Activated CD4-positive, alpha-beta memory T cell treated with anti-CD3 and anti-CD28 coated beads, Interleukin-2, amount 10 ng/mL, durations not matched to agents 7 days and 5 days (primary cell): ENCODE measurements at regions of chr11 and their contacts with region 1.

Region 1: GRCh38 chr11:57311109-57311936 is 13.4 kb downstream of the TNKS1BP1 start:
- DNase-seq: peak; percentile 82
- H3K4me3 Mint-ChIP-seq: peak overlapping the region; percentile 63
- H3K27ac Mint-ChIP-seq: no peak overlapping the region
- H3K4me1 Mint-ChIP-seq: peaks cover 20% of the 10 kb centered on the region
- H3K27me3 Mint-ChIP-seq: no peaks in the 10 kb centered on the region

Region 2: DNA sequence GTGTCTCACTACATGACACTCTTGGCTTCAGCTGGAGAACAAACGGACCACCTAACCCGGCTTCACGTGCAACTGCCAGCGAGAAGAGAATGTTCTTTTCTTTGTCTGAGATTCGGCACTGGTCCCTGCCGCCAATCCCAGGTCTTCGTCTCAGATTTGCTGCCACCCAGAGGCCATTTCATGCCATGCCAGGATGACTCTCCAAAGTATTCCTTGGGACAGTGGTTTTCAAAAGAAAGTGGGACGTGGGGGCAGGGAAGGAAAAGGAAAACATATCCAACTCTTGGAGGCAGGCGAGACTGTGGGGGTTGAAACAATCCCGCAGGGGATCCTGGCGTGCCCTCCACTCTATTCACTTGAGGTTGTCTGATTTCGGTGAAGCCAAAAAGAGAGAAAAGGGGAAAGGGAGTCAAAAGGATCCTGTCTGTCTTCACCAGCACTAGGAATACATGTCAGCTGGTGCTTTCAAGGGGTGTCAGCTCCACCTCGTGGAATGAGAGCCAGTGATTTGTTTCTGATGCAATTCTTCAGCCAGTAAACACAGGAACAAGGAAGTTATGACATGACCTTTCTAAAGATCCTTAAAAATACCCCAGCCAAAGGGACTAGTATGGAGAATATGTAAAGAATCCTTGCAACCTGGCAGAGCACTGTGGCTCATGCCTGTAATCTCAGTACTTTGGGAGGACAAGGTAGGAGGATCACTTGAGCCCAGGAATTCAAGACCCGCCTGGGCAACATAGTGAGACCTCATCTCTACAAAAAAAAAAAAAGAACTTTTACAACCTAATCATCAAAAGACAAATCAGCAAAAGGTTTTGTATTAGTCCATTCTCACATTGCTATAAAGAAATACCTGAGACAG is 33.2 kb before region 1 on chr11:
- CTCF ChIA-PET with region 1: no interaction called
- POLR2A ChIA-PET with region 1: no interaction called
- DNase-seq: peak; percentile 33
- H3K4me3 Mint-ChIP-seq: no peak overlapping the region
- H3K27ac Mint-ChIP-seq: no peak overlapping the region
- H3K4me1 Mint-ChIP-seq: peaks cover 4% of the 10 kb centered on the region
- H3K27me3 Mint-ChIP-seq: peaks cover 31% of the 10 kb centered on the region

Region 3: GRCh38 chr11:57324886-57325734 is 13.8 kb after region 1 on chr11 and contains the start of gene TNKS1BP1:
- CTCF ChIA-PET with region 1: interaction called, 7 read pairs
- POLR2A ChIA-PET with region 1: interaction called, 26 read pairs
- DNase-seq: peak; percentile 91
- H3K4me3 Mint-ChIP-seq: peak within 1 kb of the TSS; percentile 75
- H3K27ac Mint-ChIP-seq: peak within 1 kb of the TSS; percentile 91
- H3K4me1 Mint-ChIP-seq: peaks cover 49% of the 10 kb centered on the region
- H3K27me3 Mint-ChIP-seq: no peaks in the 10 kb centered on the region
- total RNA-seq, gene TNKS1BP1: 9.9 to 10.7 TPM

Region 4: GRCh38 chr11:57335343-57336110 is 24.2 kb after region 1 on chr11 and contains the start of gene SSRP1:
- CTCF ChIA-PET with region 1: no interaction called
- POLR2A ChIA-PET with region 1: interaction called, 12 read pairs
- DNase-seq: peak; percentile 89
- H3K4me3 Mint-ChIP-seq: peak within 1 kb of the TSS; percentile 97
- H3K27ac Mint-ChIP-seq: peak within 1 kb of the TSS; percentile 98
- H3K4me1 Mint-ChIP-seq: peaks cover 45% of the 10 kb centered on the region
- H3K27me3 Mint-ChIP-seq: peaks cover 13% of the 10 kb centered on the region
- total RNA-seq, gene SSRP1: 135 to 137 TPM